ENCODE measurements at regions of chr1 and their contacts with region 1.

Region 1: GRCh38 chr1:2545759-2546514 is 10.2 kb upstream of the TNFRSF14 start:
- DNase-seq: peak; percentile 73 to 76
- ATAC-seq: peak in 1 of 2 donors; percentile 55
- H3K4me3 ChIP-seq: peak overlapping the region; percentile 53 to 63 (median 56)
- H3K27ac ChIP-seq: peak overlapping the region; percentile 86 to 94 (median 88)
- H3K4me1 ChIP-seq: peaks cover 14 to 35% of the 10 kb centered on the region in 2 donors
- H3K27me3 ChIP-seq: peaks cover 14 to 35% (median 29%) of the 10 kb centered on the region in 3 donors
- CTCF ChIP-seq: no peak
- POLR2A ChIP-seq: peak in 1 of 2 donors; percentile 13

Region 2: GRCh38 chr1:2372551-2373490 is 173.1 kb before region 1 on chr1:
- in situ Hi-C with region 1: no loop called
- intact Hi-C with region 1: no loop called
- DNase-seq: no peak
- ATAC-seq: no peak
- H3K4me3 ChIP-seq: no peak overlapping the region
- H3K27ac ChIP-seq: no peak overlapping the region
- H3K4me1 ChIP-seq: no peaks in the 10 kb centered on the region
- H3K27me3 ChIP-seq: no peaks in the 10 kb centered on the region
- CTCF ChIP-seq: no peak
- POLR2A ChIP-seq: no peak

Region 3: DNA sequence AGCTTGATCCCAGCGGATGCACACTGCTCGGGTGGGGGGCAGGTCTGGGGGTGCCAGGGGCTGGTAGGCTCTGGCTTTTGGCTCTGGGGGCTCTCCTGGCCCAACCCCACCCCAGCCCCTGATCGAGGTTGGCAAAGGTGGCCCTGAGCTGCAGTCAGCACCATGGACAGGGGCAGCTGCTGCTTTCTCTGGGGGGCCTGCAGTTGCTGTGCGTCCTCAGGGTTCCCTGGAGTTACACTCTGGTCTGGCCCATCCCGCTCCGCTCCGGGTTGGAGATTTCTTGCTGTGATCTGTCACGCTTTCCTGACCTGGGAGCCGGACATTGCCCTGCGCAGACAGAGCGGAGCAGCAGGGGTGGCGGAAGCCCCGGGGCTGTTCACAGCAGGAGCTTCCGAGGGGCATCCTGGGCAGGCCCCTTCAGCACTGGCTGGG is 77.9 kb before region 1 on chr1:
- in situ Hi-C with region 1: no loop called
- intact Hi-C with region 1: loop called (anchors 10 kb)
- DNase-seq: no peak
- ATAC-seq: no peak
- H3K4me3 ChIP-seq: no peak overlapping the region
- H3K27ac ChIP-seq: no peak overlapping the region
- H3K4me1 ChIP-seq: no peaks in the 10 kb centered on the region
- H3K27me3 ChIP-seq: peaks cover 51 to 64% (median 62%) of the 10 kb centered on the region in 3 donors
- CTCF ChIP-seq: no peak
- POLR2A ChIP-seq: no peak

Region 4: DNA sequence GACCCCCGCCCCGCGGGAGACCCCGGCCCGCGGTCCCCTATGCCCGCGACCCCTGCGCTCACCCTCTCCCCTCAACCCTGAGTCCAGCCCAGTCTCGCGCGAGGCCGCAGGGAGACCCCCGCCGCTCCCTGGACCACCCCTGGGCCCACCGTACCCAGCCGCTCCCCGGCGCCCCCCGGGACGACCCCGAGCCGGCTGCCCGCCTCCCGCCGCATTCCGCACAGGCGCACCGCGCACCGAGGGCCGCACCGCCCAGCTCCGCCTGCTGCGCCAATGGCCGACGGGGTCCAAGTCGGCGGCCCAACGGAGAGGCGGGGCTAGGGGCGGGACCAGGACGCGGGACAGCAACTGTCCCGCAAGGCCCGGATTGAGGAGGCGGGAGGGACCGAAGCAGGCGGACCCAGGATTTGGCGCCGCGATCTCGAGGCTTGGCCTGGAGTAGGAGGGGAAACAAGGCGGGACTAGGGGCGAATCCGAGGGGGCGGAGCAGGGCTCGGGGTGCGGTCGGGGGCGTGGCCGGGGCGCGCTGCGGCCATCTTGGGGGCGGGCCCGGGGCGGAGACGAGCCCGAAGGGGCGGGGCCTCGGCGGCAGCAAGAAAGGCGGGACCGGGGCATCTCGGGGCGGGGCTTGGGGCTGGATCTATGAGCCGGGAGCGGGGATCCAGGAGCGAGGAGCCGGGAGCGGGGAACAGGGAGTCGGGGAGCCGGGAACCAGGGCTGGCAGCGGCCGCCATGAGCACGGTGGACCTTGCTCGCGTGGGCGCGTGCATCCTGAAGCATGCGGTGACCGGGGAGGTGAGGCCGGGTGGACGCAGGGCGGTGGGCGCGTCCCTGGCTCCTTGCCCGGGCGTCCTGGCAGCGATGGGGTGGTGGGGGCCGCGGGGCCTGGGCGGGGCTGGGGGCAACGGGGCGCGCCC is 40.5 kb after region 1 on chr1 and contains the start of gene PRXL2B:
- in situ Hi-C with region 1: no loop called
- intact Hi-C with region 1: loop called (anchors 1 kb)
- DNase-seq: peak; percentile 98
- ATAC-seq: peak; percentile 92 to 93
- H3K4me3 ChIP-seq: peak within 1 kb of the TSS; percentile 65 to 92 (median 71)
- H3K27ac ChIP-seq: peak within 1 kb of the TSS; percentile 87 to 97 (median 91)
- H3K4me1 ChIP-seq: peaks cover 11 to 17% of the 10 kb centered on the region in 2 donors
- H3K27me3 ChIP-seq: peaks cover 0 to 8% (median 6%) of the 10 kb centered on the region in 3 donors
- CTCF ChIP-seq: no peak
- POLR2A ChIP-seq: peak; percentile 79 to 83
- total RNA-seq, gene PRXL2B: 0.52 to 2.7 (median 1.1) TPM